Motor neuron (in vitro differentiated cells): ENCODE measurements at regions of chr1 and their contacts with region 1.

Region 1: GRCh38 chr1:107056426-107057196 is at the start of gene PRMT6:
- ATAC-seq: peak; percentile 79 to 92 (median 86)
- H3K4me3 ChIP-seq: peak within 1 kb of the TSS; percentile 62 to 91 (median 82)
- H3K27ac ChIP-seq: peak within 1 kb of the TSS; percentile 76 to 82
- H3K4me1 ChIP-seq: peaks cover 4 to 15% of the 10 kb centered on the region in 2 donors
- total RNA-seq, gene PRMT6: 18.0 to 49.8 (median 25.1) TPM

Region 2: DNA sequence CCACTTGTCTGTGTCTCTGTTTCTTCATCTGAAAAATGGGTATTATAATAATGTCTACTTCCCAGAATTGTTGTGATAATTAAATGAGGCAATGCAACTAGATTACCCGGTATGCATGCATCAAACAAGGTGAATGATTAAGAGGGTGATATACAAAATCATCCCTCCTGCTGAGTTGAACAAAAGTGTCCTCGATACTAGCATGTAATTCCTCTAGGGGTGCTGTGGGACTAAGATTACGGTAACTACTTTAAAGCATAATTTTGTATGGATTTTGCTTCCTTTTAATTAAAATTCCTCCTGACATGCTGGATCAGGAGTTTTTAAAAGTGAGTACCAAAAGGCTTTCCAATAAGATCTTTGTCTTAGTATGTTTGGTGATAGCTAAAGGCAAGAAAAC is 98.8 kb before region 1 on chr1:
- in situ Hi-C with region 1: loop called in 1 of 9 experiments (anchors 25 kb)
- ATAC-seq: no peak
- H3K4me3 ChIP-seq: no peak overlapping the region
- H3K27ac ChIP-seq: no peak overlapping the region
- H3K4me1 ChIP-seq: peaks cover 7 to 8% of the 10 kb centered on the region in 2 donors

Region 3: GRCh38 chr1:107196973-107197562 is 140.5 kb after region 1 on chr1:
- in situ Hi-C with region 1: no loop called
- ATAC-seq: no peak
- H3K4me3 ChIP-seq: no peak overlapping the region
- H3K27ac ChIP-seq: no peak overlapping the region
- H3K4me1 ChIP-seq: peaks cover 0 to 10% of the 10 kb centered on the region in 2 donors